ENCODE measurements at regions of chr19 and their contacts with region 1.

Region 1: DNA sequence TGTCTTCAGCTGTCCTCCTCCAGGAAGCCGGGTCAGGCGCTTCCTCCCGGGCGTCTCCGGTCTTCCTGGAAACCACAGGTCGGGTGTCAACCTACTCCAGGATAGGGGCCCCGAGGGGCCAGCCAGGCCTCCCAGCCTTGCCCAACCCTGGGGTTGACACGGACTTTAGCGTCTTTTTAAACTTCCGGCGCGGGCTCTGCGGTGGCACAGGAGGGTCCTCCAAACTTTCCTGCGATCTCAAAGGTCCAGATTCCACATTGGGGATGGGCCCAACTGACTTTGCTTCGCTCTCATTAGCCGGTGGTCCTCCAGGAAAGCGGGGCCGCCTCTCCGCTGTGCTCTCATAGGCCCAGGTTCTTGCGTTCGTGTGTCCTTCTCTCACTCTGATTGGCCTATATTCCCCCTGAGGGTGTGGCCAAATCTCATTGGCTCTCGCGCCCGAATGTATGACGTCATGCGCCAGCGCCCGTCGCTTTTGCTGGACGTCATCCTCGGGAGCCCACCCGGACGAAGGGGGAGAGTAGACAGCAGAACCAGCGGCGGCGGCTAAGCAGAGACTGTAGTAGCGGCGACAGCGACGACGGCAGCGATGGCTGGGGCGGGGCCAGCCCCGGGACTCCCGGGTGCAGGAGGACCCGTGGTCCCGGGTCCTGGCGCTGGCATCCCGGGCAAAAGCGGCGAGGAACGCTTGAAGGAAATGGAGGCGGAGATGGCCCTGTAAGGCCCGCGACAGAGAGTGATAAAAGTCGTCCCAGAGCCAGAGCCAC is at the start of gene RBM42:
- DNase-seq: peak; percentile 96
- ATAC-seq: peak; percentile 99
- H3K4me3 Mint-ChIP-seq: peak within 1 kb of the TSS; percentile 99
- H3K27ac Mint-ChIP-seq: peak within 1 kb of the TSS; percentile 93
- H3K4me1 Mint-ChIP-seq: peaks cover 17% of the 10 kb centered on the region
- H3K27me3 Mint-ChIP-seq: no peaks in the 10 kb centered on the region
- CTCF ChIP-seq: no peak
- total RNA-seq, gene RBM42: 73.6 and 76.1 TPM in 2 replicates

Region 2: GRCh38 chr19:35585848-35586247 is 42.9 kb before region 1 on chr19 and contains the start of gene PMIS2:
- CTCF ChIA-PET with region 1: no interaction called
- POLR2A ChIA-PET with region 1: no interaction called
- intact Hi-C with region 1: no loop called
- DNase-seq: no peak
- ATAC-seq: no peak
- H3K4me3 Mint-ChIP-seq: no peak within 1 kb of the TSS
- H3K27ac Mint-ChIP-seq: no peak within 1 kb of the TSS
- H3K4me1 Mint-ChIP-seq: no peaks in the 10 kb centered on the region
- H3K27me3 Mint-ChIP-seq: peaks cover 19% of the 10 kb centered on the region
- CTCF ChIP-seq: no peak
- total RNA-seq, gene PMIS2: not detected in 2 replicates

Region 3: GRCh38 chr19:35612559-35613321 is 16.0 kb before region 1 on chr19 and contains the start of gene HAUS5:
- CTCF ChIA-PET with region 1: no interaction called
- POLR2A ChIA-PET with region 1: interaction called, 6 read pairs
- intact Hi-C with region 1: loop called (anchors 1 kb)
- DNase-seq: peak; percentile 99
- ATAC-seq: peak; percentile 78
- H3K4me3 Mint-ChIP-seq: peak within 1 kb of the TSS; percentile 87
- H3K27ac Mint-ChIP-seq: peak within 1 kb of the TSS; percentile 93
- H3K4me1 Mint-ChIP-seq: peaks cover 48% of the 10 kb centered on the region
- H3K27me3 Mint-ChIP-seq: no peaks in the 10 kb centered on the region
- CTCF ChIP-seq: no peak
- total RNA-seq, gene HAUS5: 31.5 and 36.1 TPM in 2 replicates

Region 4: GRCh38 chr19:35648017-35648961 is 19.5 kb after region 1 on chr19 and contains the start of gene COX6B1:
- CTCF ChIA-PET with region 1: no interaction called
- POLR2A ChIA-PET with region 1: interaction called, 13 read pairs
- intact Hi-C with region 1: loop called (anchors 1 kb)
- DNase-seq: peak; percentile 72
- ATAC-seq: peak; percentile 66
- H3K4me3 Mint-ChIP-seq: peak within 1 kb of the TSS; percentile 96
- H3K27ac Mint-ChIP-seq: peak within 1 kb of the TSS; percentile 87
- H3K4me1 Mint-ChIP-seq: peaks cover 37% of the 10 kb centered on the region
- H3K27me3 Mint-ChIP-seq: no peaks in the 10 kb centered on the region
- CTCF ChIP-seq: no peak
- total RNA-seq, gene COX6B1: 334 and 401 TPM in 2 replicates

Region 5: GRCh38 chr19:35702223-35703012 is 73.7 kb after region 1 on chr19:
- CTCF ChIA-PET with region 1: no interaction called
- POLR2A ChIA-PET with region 1: no interaction called
- intact Hi-C with region 1: loop called (anchors 2 kb)
- DNase-seq: peak; percentile 82
- ATAC-seq: peak; percentile 99
- H3K4me3 Mint-ChIP-seq: peak overlapping the region; percentile 98
- H3K27ac Mint-ChIP-seq: peak overlapping the region; percentile 96
- H3K4me1 Mint-ChIP-seq: peaks cover 7% of the 10 kb centered on the region
- H3K27me3 Mint-ChIP-seq: no peaks in the 10 kb centered on the region
- CTCF ChIP-seq: no peak

Measured in activated B cell treated with CpG ODN at 0.5 μM for 24 hours (primary cell).